Mammary epithelial cell (primary cell): ENCODE measurements at regions of chr3 and their contacts with region 1.

Region 1: GRCh38 chr3:142090931-142091330 is 58.4 kb downstream of the TFDP2 start:
- DNase-seq: no peak
- H3K4me3 ChIP-seq: no peak overlapping the region
- H3K27ac ChIP-seq: no peak overlapping the region
- H3K4me1 ChIP-seq: peaks cover 8% of the 10 kb centered on the region
- H3K27me3 ChIP-seq: no peaks in the 10 kb centered on the region
- CTCF ChIP-seq: no peak

Region 2: GRCh38 chr3:142056656-142057330 is 34.1 kb before region 1 on chr3:
- CTCF ChIA-PET with region 1: no interaction called
- dilution Hi-C with region 1: loop called (anchors 5 kb)
- in situ Hi-C with region 1: no loop called
- intact Hi-C with region 1: no loop called
- DNase-seq: no peak
- H3K4me3 ChIP-seq: no peak overlapping the region
- H3K27ac ChIP-seq: no peak overlapping the region
- H3K4me1 ChIP-seq: no peaks in the 10 kb centered on the region
- H3K27me3 ChIP-seq: no peaks in the 10 kb centered on the region
- CTCF ChIP-seq: no peak